ENCODE measurements at regions of chr18 and their contacts with region 1.

Region 1: DNA sequence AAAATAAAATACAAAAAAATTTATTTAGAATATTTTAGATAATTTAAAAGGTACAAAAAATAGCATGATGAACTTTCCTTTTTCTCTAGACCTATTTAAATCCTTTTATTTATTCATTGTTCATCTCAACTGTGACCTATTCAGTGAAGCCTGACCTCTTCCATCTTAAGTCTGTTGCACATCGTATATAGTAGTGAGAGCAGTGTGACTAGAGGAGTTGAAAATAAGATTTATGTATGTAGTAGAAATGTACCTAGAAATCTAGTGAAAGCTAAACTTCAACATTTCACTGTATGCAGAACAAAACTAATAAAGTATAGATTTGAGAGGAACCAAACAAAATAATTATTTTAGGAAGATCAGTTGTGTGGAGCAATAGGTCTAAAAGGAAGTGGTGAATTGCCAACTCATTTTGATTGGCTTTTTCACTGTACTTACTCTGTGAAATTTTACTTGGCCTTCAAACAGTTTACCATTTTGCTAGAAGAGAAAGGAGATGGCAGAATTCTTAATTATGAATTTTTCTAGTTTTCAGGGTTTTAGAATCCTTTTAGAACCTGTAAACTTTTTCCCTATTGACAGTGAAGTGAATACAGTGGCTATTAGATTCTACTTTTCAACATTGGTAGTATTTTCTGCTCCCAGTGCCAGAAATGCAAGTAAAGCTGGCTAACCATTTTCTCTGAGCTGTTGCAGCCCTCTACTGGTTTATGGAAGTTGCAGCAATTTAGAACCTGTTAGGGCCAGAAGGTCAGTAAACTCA is 11.0 kb downstream of the ANKRD12 start:
- DNase-seq: no peak
- ATAC-seq: peak; percentile 89 to 92

Region 2: GRCh38 chr18:9066817-9067306 is 80.8 kb before region 1 on chr18:
- intact Hi-C with region 1: loop called in 1 of 2 experiments (anchors 2 kb)
- DNase-seq: no peak
- ATAC-seq: no peak

Region 3: DNA sequence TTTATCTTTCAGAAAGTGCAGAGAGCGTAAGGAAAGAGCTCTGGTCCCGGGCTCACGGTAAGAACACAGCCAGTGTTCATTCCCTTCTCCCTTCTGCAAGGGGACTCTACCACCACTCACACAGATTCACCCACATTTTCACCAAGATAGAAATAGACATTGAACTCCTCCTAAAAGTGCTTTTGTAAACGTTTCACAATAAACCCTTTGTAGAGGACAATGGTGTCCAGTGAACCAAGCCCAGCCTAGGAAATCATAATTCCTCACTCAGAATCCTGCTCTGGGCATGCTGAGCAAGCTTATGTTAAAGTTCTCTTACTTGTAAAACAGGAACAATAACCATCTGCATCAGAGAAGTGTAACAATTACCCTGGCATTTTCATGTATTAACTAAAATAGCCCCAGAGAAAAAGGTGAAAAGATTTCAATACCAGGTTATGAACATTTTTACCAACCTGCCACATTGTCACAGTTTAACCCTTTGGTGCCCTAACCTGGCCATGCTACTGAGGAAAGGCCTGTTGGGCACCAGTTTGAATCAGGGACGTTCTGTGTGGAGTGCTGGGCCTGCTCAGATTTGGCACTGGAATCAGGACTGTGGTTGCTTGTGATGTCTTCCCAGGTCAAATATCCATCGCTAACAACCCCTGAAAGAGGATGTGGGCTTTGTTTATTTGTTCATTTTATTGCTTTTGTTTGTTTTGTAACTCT is 67.6 kb before region 1 on chr18:
- intact Hi-C with region 1: loop called (anchors 2 to 5 kb)
- DNase-seq: no peak
- ATAC-seq: peak in 1 of 2 donors; percentile 49